ENCODE measurements at regions of chr17 and their contacts with region 1.

Region 1: DNA sequence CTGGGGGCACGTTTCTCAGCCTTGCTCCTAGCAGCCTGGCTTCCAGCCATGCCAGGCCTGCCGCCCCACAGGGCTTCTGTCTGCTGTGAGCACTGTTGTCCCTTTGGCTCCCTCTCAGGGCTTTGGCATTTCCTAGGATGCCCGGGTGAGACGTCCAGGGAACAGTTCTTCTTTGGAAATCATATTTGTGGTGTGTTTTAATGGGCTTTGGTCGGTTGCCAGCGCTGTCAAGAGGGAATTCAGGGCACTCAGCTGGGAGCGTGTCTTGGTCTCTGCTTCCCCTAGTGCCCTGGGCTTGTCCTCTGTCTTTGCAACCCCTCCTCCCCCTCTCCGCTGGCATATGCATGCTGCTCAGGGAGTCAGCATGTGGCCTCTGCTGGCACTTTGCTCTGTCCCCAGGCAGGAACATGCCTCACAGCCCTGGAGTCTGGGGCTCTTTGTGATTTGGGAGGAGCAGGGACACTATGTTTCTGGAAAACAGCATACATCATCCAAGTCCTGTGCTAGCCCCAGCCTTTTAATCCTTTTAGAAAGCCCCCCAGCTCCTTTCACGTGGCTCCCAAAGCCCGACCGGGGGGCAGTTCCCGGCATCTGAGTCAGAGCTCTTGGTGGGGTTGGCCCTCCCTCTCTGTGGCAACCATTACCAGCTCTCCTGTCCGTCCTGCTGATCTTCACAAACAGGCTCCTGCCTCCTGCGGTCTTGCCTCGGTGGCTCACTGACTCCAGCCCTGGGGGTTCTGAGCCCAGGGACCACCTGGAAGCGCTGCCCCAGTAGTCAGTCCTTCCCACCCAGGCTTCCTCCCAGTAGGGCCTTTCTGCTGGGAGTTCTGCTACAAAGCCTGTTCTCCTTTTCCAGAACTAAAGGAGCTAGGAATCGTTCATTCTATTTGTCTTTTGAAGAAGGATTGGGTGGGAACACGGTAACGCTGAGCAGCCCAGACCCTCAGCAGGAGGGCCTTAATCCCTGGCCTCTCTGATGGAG is 26.7 kb downstream of the SAP30BP start:
- DNase-seq: peak; percentile 63
- H3K27ac ChIP-seq: peak overlapping the region; percentile 100
- CTCF ChIP-seq: no peak; the same call in 1 of the 2 replicates

Region 2: GRCh38 chr17:75661531-75661930 is 32.3 kb before region 1 on chr17:
- CTCF ChIA-PET with region 1: interaction called, 12 read pairs
- POLR2A ChIA-PET with region 1: no interaction called
- DNase-seq: no peak
- H3K27ac ChIP-seq: no peak overlapping the region
- CTCF ChIP-seq: no peak

Region 3: DNA sequence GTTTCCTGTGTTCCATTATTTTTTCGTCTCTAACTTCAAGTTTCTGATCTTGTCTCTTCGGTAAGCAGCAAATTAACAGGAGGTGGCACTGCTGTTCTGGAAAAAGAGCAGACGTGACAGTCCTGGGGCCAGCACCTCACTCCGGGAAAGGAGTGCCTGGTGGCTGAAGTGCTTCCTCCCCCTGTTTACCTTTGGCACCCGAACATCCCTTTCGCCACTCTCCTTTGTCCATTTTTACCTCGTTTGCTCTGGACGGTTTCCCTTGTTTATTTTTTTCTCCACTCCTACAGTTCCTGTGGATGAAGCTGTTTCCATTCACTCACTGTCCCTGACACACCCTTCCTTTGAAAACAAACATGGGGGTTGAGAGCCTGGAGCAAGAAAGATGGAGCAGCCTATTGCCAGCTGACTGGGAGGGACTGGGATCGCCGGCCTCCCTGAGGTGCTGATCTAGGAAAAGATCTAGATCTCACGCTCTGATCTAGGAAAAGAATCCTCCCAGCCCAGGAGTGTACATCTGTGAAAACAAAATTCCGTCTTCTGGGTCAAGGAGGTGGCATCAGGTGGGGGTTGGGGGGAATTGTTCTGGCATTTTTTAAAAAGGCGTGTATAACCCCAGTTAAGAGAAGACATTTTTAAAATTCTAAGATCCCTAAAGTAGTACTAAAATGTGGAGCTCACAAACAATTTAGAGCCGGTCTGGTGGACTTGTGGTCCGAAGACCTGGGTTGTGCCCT is 13.9 kb before region 1 on chr17:
- CTCF ChIA-PET with region 1: interaction called, 11 read pairs
- POLR2A ChIA-PET with region 1: interaction called, 3 read pairs
- DNase-seq: peak; percentile 49
- H3K27ac ChIP-seq: peak overlapping the region; percentile 100
- CTCF ChIP-seq: no peak; the same call in 1 of the 2 replicates

Region 4: DNA sequence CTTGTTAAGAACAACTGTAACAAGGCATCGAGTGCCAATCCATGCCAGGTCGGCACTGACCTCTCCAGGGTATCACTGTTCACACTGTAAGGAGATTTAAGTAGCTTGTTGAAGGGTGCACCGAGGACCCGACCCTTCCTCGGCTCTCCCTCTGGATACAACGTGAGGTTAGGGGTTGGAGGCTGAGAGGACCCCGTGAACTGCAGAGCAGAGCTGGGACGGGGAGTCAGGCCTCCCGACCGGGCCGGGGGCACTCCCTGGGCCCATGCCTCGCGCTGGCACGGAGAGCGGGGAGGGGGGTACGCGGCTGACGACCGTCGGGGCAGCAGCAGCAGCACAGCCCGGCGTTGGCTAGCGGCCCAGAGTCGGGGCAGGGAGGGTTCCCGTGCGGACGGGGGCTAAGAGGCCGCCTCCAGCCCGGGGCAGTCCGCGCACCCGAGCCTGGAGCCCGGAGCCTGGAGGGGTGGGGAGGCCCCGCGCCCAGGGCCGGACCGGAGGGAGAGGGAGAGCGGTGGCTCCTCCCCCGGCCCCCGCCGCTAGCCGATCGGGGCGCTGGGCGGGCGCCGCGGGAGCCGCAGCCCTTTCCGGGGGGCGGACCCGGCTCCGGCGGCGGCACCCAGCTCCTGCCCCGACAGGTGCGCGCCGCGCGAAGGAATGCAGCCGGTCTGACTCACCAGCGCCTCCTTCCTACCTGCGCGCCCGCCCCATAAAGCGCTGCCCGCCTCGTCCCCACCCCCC is 27.1 kb after region 1 on chr17 and contains the start of gene ITGB4:
- CTCF ChIA-PET with region 1: no interaction called
- POLR2A ChIA-PET with region 1: interaction called, 15 read pairs
- DNase-seq: peak; percentile 92
- H3K27ac ChIP-seq: peak within 1 kb of the TSS; percentile 98
- CTCF ChIP-seq: no peak

Measured in RWPE1 (cell line).